Activated CD4-positive, alpha-beta T cell treated with anti-CD3 and anti-CD28 coated beads for 36 hours (primary cell): ENCODE measurements at regions of chr11 and their contacts with region 1.

Region 1: DNA sequence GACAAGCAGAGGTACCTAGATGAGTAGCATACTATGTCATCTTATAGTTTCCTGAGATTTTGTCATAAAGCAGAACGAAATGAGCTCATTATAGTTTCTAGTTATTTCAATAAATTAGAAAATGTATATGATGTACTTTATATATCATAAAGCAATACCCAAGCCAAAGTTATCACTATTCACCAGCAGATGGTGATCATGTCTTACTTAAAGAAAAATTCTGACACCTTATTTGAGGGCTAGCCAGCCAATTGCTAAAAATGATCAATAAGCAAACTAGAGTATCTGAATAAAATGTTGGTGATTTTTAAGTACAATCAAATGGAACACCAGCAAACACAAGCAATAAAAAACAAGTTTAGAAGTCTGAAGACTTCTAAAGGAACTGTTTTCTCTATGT is 44.1 kb downstream of the RSF1 start:
- DNase-seq: no peak
- ATAC-seq: peak; percentile 39
- H3K4me3 Mint-ChIP-seq: no peak overlapping the region
- H3K27ac Mint-ChIP-seq: no peak overlapping the region
- H3K4me1 Mint-ChIP-seq: peaks cover 51% of the 10 kb centered on the region
- H3K27me3 Mint-ChIP-seq: no peaks in the 10 kb centered on the region

Region 2: GRCh38 chr11:78000193-78000592 is 223.7 kb after region 1 on chr11:
- CTCF ChIA-PET with region 1: interaction called, 5 read pairs
- POLR2A ChIA-PET with region 1: interaction called, 3 read pairs
- intact Hi-C with region 1: loop called (anchors 1 kb)
- DNase-seq: peak; percentile 59
- ATAC-seq: peak; percentile 93
- H3K4me3 Mint-ChIP-seq: no peak overlapping the region
- H3K27ac Mint-ChIP-seq: no peak overlapping the region
- H3K4me1 Mint-ChIP-seq: peaks cover 7% of the 10 kb centered on the region
- H3K27me3 Mint-ChIP-seq: no peaks in the 10 kb centered on the region